HEK293T (cell line): ENCODE measurements at regions of chr18 and their contacts with region 1.

Region 1: DNA sequence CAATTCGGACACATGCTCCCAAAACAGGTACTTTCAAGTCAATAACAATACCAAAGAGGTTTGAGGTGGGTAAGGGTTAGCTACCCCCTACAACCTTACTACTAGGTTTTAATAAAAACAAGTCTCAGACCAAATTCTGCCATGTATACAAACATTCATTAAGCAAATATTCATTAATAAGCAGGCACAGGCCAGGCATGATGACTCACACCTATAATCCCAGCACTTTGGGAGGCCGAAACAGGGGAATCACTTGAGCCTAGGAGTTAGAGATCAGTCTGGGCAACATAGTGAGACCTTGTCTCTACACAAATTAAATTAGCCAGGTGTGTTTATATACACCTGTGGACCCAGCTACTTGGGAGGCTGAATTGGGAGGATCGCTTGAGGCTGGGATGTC is 11.7 kb upstream of the ELAC1 start:
- DNase-seq: no peak

Region 2: DNA sequence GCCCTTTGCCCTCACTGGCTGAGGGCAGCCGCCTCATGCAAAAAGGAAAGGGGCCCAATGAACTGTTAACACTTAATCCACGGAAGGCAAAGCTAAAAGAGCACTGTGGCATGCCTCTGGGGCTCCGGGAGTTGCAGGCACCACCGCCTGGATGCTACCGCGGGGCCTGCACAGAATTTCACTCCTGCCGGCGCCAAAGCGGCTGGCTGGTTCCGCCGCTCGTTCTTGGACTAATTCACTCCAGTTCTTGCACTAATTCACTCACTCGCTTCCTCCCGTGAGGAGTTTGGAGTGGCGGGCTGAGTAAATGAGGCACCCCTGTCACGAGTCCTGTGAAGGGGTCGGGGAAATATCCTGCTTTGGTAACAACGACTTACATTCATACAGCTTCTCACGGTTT is 410.2 kb before region 1 on chr18:
- CTCF ChIA-PET with region 1: no interaction called
- POLR2A ChIA-PET with region 1: no interaction called
- DNase-seq: no peak

Region 3: GRCh38 chr18:50967714-50968661 is 11.9 kb after region 1 on chr18 and contains the start of gene ELAC1:
- CTCF ChIA-PET with region 1: no interaction called
- POLR2A ChIA-PET with region 1: interaction called, 14 read pairs
- DNase-seq: peak; percentile 77